Esophagus muscularis mucosa (tissue), 4 donors: ENCODE measurements at regions of chr12 and their contacts with region 1.

Region 1: DNA sequence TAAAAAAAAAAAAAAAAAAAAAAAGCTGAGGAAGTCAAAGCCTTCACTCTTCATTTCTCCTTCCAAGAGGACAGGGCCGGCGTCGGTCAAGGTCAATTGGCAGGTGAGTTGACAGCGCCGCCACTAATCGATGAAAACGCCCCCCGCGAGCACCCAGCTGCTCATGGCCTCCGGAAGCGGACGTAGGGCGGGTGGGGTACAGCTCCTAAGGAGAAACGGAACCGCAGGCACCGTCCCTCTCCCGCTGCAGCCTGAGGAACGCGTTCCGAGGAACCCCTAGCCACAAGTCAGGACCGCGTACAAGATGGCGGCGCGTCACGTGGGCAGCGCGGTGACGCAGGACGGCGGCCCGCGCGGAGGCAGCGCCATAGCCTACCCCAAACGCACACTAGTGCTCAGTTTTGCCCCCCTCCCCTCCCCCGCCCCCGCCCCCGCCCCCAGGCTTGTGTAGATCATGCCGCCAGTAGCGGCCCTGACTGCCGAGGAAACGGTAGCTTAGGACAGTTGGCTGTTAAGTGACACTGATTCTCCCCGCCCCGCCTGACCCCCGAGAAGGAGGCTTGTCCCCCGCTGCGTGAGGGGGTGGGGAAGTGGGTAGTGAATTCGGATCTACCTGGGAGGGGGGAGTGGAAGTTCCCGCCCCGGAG is at the start of gene ATF1:
- DNase-seq: peak; percentile 98
- H3K4me3 ChIP-seq: peak within 1 kb of the TSS; percentile 88 to 100 (median 97)
- H3K27ac ChIP-seq: peak within 1 kb of the TSS; percentile 98 to 99 (median 98)
- H3K4me1 ChIP-seq: peaks cover 21 to 47% (median 43%) of the 10 kb centered on the region in 4 donors
- H3K27me3 ChIP-seq: no peaks in the 10 kb centered on the region
- CTCF ChIP-seq: peak in 1 of 3 experiments; percentile 26
- EP300 ChIP-seq: no peak
- POLR2A ChIP-seq: peak; percentile 75
- total RNA-seq, gene ATF1: 16.6 to 29.1 (median 21.1) TPM

Region 2: DNA sequence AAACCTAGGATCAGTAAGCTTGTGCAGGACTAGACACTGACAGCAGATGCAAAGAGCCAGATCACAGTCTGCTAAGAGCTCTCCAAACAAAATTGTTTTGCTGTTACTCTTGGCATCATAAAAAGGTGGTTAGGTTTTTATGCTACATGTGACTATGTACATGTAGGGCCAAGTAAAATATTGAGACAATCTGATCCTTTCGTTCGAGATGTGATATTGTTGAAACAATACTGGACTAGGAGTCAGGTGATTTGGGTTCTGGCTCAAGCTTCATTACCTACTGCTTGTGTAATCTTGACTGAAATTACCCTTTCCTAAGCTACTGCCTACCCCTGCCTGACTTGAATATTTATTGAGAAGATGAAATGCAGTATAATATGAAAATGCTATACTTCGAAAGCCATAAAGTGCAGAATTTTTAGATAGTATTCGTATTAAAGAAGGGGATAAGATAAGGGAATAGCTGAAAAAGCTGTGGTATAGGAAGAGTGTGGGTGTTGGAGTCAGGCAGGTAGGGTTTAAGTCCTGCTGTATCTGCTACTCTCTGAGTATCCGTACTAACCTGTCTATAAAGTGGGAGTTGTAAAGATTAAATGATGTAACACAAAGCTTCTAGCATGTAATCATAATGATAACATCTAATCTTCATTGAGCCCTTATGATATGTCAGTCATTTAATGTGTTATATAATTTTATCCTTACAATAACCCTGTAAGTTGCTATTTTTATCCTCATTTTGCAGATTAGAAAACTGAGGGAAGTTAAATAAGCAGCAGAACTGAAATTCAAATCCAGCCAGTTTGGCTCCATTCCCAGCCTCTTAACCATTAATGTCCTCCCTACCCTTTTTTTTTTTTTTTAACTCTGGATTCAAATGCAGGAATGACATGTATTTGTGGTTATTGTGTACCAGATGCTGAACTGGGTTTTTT is 38.5 kb before region 1 on chr12:
- intact Hi-C with region 1: no loop called
- DNase-seq: no peak
- H3K4me3 ChIP-seq: no peak overlapping the region
- H3K27ac ChIP-seq: peak overlapping the region in 1 of 4 donors; percentile 11
- H3K4me1 ChIP-seq: peaks cover 0 to 22% (median 4%) of the 10 kb centered on the region in 4 donors
- H3K27me3 ChIP-seq: no peaks in the 10 kb centered on the region
- CTCF ChIP-seq: no peak
- EP300 ChIP-seq: no peak
- POLR2A ChIP-seq: no peak

Region 3: DNA sequence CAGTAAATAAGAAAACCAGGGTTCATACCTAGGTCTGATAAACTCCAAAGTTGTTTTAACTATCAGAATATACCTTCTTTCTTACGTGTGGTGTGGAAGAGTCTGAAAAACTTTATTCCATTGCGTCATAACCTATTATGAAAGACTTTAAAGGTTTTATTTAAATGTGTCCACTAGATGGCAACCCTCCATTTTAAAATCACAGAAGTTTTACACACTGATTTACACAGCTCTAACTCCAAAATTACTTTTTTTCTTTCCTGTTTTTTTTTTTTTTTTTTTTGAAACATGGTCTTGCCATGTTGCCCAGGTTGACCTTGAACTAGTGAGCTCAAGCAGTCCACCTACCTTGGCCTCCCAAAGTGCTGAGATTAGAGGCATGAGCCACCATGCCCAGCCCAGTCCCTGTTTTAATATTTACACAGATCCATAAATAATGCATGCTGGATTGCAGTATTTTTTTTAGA is 61.6 kb after region 1 on chr12:
- intact Hi-C with region 1: loop called (anchors 5 kb)
- DNase-seq: no peak
- H3K4me3 ChIP-seq: no peak overlapping the region
- H3K27ac ChIP-seq: peak overlapping the region; percentile 58 to 75 (median 63)
- H3K4me1 ChIP-seq: peaks cover 0 to 15% (median 9%) of the 10 kb centered on the region in 4 donors
- H3K27me3 ChIP-seq: no peaks in the 10 kb centered on the region
- CTCF ChIP-seq: peak; percentile 53 to 60 (median 53)
- EP300 ChIP-seq: no peak
- POLR2A ChIP-seq: no peak

Region 4: DNA sequence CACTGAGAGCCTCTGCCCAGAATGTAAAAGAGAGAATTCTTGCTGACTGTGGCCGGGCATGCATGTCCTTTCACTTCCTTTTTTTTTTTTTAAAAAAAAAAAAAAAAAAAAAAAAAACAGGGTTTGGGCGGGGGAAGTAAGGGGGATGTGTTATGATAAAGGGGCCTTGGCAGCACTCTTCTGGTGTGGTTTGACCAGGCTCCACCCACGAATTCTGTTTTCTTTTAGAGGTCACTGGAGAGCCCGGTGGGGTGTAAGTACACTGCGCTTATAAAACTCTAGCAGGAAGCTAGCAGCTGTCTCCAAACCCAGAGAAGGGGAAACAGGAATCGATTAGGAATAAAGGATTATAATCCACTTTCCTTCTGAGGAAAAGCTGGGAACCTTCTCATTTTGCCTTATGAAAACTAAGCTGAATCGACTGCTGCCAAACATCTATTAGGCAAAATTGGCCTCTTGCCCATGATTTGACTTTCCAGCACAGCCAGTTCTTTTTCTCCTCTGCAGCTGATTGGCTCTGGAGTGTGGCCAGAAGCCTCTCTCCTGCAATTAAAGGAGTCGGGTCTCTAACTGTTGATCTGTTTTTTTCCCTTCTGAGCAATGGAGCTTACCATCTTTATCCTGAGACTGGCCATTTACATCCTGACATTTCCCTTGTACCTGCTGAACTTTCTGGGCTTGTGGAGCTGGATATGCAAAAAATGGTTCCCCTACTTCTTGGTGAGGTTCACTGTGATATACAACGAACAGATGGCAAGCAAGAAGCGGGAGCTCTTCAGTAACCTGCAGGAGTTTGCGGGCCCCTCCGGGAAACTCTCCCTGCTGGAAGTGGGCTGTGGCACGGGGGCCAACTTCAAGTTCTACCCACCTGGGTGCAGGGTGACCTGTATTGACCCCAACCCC is 160.9 kb after region 1 on chr12:
- intact Hi-C with region 1: loop called (anchors 5 kb)
- DNase-seq: peak; percentile 97
- H3K4me3 ChIP-seq: peak overlapping the region; percentile 72 to 91 (median 83)
- H3K27ac ChIP-seq: peak overlapping the region; percentile 87 to 91 (median 88)
- H3K4me1 ChIP-seq: peaks cover 35 to 57% (median 53%) of the 10 kb centered on the region in 4 donors
- H3K27me3 ChIP-seq: no peaks in the 10 kb centered on the region
- CTCF ChIP-seq: no peak
- EP300 ChIP-seq: no peak
- POLR2A ChIP-seq: no peak

Region 5: GRCh38 chr12:51198568-51199365 is 435.0 kb after region 1 on chr12:
- intact Hi-C with region 1: no loop called
- DNase-seq: no peak
- H3K4me3 ChIP-seq: no peak overlapping the region
- H3K27ac ChIP-seq: no peak overlapping the region
- H3K4me1 ChIP-seq: no peaks in the 10 kb centered on the region
- H3K27me3 ChIP-seq: no peaks in the 10 kb centered on the region
- CTCF ChIP-seq: no peak
- EP300 ChIP-seq: no peak
- POLR2A ChIP-seq: no peak